ENCODE measurements at regions of chr1 and their contacts with region 1.

Region 1: GRCh38 chr1:184075055-184076029 is 23.8 kb downstream of the TSEN15 start:
- DNase-seq: peak; percentile 75
- H3K4me3 ChIP-seq: no peak overlapping the region
- H3K27ac ChIP-seq: no peak overlapping the region
- H3K4me1 ChIP-seq: no peaks in the 10 kb centered on the region
- H3K27me3 ChIP-seq: no peaks in the 10 kb centered on the region
- CTCF ChIP-seq: peak; percentile 40 to 44
- POLR2A ChIP-seq: no peak

Region 2: DNA sequence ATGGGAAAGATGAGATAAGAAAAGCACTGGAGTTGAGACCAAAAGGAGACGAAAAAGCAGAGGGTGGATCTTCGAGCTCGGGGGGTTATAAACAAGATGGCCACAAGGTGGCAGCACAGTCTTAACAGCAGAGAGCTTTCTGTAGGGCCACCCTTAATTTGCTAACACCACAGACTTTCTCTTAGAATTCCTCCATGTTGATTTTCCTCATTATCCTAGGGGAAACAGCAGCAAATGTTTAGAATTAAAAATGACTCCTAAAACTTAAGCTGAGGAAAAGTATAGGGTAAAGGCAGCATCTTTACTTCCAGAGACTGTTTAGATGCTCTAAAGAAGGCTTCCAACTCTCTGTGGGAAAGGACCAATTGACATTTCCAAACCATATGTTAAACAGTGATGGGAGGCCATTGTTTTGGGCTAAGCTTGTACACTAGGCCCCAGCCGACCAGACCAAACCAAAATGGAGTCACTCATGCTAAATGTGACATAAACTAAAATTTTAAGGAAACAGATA is 419.7 kb before region 1 on chr1:
- CTCF ChIA-PET with region 1: interaction called, 5 read pairs
- POLR2A ChIA-PET with region 1: no interaction called
- dilution Hi-C with region 1: no loop called
- intact Hi-C with region 1: loop called (anchors 1 kb)
- DNase-seq: peak; percentile 81
- H3K4me3 ChIP-seq: no peak overlapping the region
- H3K27ac ChIP-seq: no peak overlapping the region
- H3K4me1 ChIP-seq: peaks cover 27% of the 10 kb centered on the region
- H3K27me3 ChIP-seq: no peaks in the 10 kb centered on the region
- CTCF ChIP-seq: peak; percentile 73 to 81
- POLR2A ChIP-seq: no peak

Region 3: GRCh38 chr1:183881387-183882131 is 193.8 kb before region 1 on chr1:
- CTCF ChIA-PET with region 1: no interaction called
- POLR2A ChIA-PET with region 1: no interaction called
- dilution Hi-C with region 1: no loop called
- intact Hi-C with region 1: no loop called
- DNase-seq: peak; percentile 98
- H3K4me3 ChIP-seq: no peak overlapping the region
- H3K27ac ChIP-seq: peak overlapping the region; percentile 77
- H3K4me1 ChIP-seq: peaks cover 43% of the 10 kb centered on the region
- H3K27me3 ChIP-seq: no peaks in the 10 kb centered on the region
- CTCF ChIP-seq: no peak
- POLR2A ChIP-seq: peak; percentile 56

Region 4: DNA sequence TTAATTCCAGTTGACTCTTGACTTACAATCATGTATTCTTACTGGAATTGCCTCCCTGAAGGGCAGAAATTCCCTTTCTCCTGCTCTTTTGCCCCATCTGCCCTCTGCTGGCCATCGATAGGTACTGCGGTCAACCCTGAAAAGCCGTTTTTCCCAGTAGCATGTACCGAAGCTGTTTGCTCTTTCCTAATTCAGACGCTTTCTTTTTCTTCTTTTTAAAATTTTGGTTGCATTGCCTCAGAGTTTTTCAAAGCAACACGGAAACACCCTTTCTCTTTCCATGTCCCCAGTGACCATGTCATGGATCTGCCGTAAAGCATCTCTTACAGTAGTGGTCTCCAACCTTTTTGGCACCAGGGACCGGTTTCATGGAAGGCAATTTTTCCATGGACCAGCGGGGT is 147.3 kb after region 1 on chr1:
- CTCF ChIA-PET with region 1: interaction called, 143 read pairs
- POLR2A ChIA-PET with region 1: no interaction called
- dilution Hi-C with region 1: no loop called
- intact Hi-C with region 1: loop called (anchors 1 kb)
- DNase-seq: peak; percentile 57
- H3K4me3 ChIP-seq: no peak overlapping the region
- H3K27ac ChIP-seq: no peak overlapping the region
- H3K4me1 ChIP-seq: no peaks in the 10 kb centered on the region
- H3K27me3 ChIP-seq: peaks cover 6 to 8% of the 10 kb centered on the region in 2 experiments
- CTCF ChIP-seq: peak; percentile 87 to 90
- POLR2A ChIP-seq: no peak

Region 5: GRCh38 chr1:184494929-184495328 is 419.6 kb after region 1 on chr1:
- CTCF ChIA-PET with region 1: no interaction called
- POLR2A ChIA-PET with region 1: no interaction called
- dilution Hi-C with region 1: no loop called
- intact Hi-C with region 1: loop called (anchors 10 kb)
- DNase-seq: no peak
- H3K4me3 ChIP-seq: no peak overlapping the region
- H3K27ac ChIP-seq: no peak overlapping the region
- H3K4me1 ChIP-seq: peaks cover 8% of the 10 kb centered on the region
- H3K27me3 ChIP-seq: no peaks in the 10 kb centered on the region
- CTCF ChIP-seq: no peak
- POLR2A ChIP-seq: no peak

Region 6: GRCh38 chr1:184691719-184692324 is 616.5 kb after region 1 on chr1:
- CTCF ChIA-PET with region 1: interaction called, 34 read pairs
- POLR2A ChIA-PET with region 1: no interaction called
- dilution Hi-C with region 1: no loop called
- intact Hi-C with region 1: loop called (anchors 1 kb)
- DNase-seq: peak; percentile 67
- H3K4me3 ChIP-seq: no peak overlapping the region
- H3K27ac ChIP-seq: no peak overlapping the region
- H3K4me1 ChIP-seq: no peaks in the 10 kb centered on the region
- H3K27me3 ChIP-seq: no peaks in the 10 kb centered on the region
- CTCF ChIP-seq: peak; percentile 52 to 61
- POLR2A ChIP-seq: no peak